Gastrocnemius medialis (tissue), 4 donors: ENCODE measurements at regions of chr13 and their contacts with region 1.

Region 1: DNA sequence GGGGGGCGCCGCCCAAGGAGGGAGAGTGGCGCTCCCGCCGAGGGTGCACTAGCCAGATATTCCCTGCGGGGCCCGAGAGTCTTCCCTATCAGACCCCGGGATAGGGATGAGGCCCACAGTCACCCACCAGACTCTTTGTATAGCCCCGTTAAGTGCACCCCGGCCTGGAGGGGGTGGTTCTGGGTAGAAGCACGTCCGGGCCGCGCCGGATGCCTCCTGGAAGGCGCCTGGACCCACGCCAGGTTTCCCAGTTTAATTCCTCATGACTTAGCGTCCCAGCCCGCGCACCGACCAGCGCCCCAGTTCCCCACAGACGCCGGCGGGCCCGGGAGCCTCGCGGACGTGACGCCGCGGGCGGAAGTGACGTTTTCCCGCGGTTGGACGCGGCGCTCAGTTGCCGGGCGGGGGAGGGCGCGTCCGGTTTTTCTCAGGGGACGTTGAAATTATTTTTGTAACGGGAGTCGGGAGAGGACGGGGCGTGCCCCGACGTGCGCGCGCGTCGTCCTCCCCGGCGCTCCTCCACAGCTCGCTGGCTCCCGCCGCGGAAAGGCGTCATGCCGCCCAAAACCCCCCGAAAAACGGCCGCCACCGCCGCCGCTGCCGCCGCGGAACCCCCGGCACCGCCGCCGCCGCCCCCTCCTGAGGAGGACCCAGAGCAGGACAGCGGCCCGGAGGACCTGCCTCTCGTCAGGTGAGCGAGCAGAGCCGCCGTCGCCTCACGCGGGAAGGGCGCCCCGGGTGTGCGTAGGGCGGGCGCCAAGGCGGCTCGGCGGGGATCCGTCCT is at the start of gene RB1:
- DNase-seq: peak; percentile 81 to 88
- ATAC-seq: peak; percentile 93 to 94
- H3K4me3 ChIP-seq: peak within 1 kb of the TSS; percentile 82 to 98 (median 92)
- H3K27ac ChIP-seq: peak within 1 kb of the TSS; percentile 94 to 99 (median 99)
- H3K4me1 ChIP-seq: peaks cover 13 to 23% of the 10 kb centered on the region in 2 donors
- H3K27me3 ChIP-seq: no peaks in the 10 kb centered on the region
- CTCF ChIP-seq: peak in 1 of 5 experiments; percentile 8
- POLR2A ChIP-seq: peak; percentile 97
- total RNA-seq, gene RB1: 29.3 to 45.6 (median 33.2) TPM

Region 2: GRCh38 chr13:48094781-48095502 is 208.6 kb before region 1 on chr13 and contains the start of gene MED4:
- in situ Hi-C with region 1: loop called in 1 of 4 experiments (anchors 10 kb)
- intact Hi-C with region 1: loop called (anchors 5 kb)
- DNase-seq: peak; percentile 85 to 92
- ATAC-seq: peak; percentile 97 to 98
- H3K4me3 ChIP-seq: peak within 1 kb of the TSS; percentile 85 to 99 (median 93)
- H3K27ac ChIP-seq: peak within 1 kb of the TSS; percentile 84 to 94 (median 91)
- H3K4me1 ChIP-seq: peaks cover 37 to 44% of the 10 kb centered on the region in 2 donors
- H3K27me3 ChIP-seq: no peaks in the 10 kb centered on the region
- CTCF ChIP-seq: peak; percentile 96 to 99 (median 98)
- POLR2A ChIP-seq: peak; percentile 85 to 86
- total RNA-seq, gene MED4: 30.7 to 37.5 (median 31.9) TPM

Region 3: DNA sequence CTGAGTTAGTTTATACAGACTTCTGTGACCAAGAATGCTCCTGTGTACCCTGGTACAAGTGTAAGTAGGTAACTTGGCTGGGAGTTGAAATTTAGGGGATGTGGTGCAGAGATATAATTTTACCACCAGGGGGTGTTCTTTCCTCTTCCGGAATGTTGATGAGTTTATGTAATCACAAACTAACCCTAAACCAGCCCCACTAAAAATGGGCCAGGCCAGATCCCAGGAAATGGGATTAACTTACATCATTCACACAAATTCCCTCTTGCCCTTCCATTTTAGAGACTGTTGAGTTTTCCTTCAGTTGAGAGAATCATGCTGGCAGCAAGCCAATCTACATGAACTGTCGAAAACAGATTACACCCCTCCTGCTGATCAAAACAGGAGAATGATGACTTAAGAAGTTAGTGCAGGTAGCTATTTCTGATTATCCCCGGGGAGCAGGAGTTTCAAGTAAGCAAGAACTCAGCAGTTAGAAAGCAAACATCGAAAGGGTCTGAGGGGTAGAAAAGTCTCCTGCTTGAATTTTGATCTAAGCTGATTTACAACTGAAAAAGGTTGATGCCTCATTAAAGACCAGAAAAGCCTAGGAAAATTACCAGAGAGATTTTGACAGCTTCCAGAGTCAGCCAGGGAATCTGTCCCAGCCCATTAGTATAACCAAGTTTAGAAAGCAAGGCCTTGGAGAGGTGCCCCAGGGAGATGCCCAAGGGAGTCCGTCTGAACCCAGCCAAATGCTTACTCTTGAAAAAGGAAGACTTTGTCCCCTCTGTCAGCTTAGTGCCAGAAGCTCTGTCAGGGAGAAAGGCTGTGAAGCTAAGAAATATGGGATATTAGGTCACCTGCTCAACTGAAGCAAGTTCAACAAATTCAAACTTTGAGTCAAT is 176.4 kb before region 1 on chr13:
- in situ Hi-C with region 1: loop called in 1 of 4 experiments (anchors 10 kb)
- intact Hi-C with region 1: loop called (anchors 2 kb)
- DNase-seq: peak; percentile 43 to 72
- ATAC-seq: peak; percentile 73 to 79
- H3K4me3 ChIP-seq: no peak overlapping the region
- H3K27ac ChIP-seq: peak overlapping the region; percentile 27 to 80 (median 73)
- H3K4me1 ChIP-seq: peaks cover 12 to 33% of the 10 kb centered on the region in 2 donors
- H3K27me3 ChIP-seq: no peaks in the 10 kb centered on the region
- CTCF ChIP-seq: peak; percentile 53 to 74 (median 72)
- POLR2A ChIP-seq: no peak

Region 4: DNA sequence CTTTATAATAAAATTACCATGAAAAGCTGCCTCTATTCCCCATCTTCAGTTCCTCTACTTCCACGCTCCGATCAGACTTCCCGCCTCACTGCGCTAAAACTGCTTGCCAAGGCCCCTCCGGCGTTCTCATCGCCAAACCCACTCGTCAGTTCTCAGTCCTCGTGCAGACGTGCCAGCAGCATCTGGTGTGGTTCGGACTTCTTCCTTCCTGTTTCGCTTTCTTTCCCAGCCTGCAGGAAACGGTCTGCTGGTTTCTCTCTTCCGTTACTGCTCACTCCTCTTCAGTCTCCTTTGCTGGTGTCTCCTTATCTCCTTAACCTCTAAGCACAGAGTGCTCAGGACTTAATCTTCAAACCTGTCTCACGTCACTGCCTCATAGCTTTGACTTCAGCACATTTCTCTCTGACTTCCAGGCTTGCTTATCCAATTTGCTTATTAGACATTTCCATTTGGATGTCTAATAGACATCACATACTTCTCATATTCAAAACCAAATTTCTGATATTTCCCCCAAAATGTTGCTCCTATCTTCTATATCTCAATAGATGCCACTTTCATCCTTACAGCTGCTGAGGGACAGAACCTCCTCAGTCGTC is 189.0 kb after region 1 on chr13:
- in situ Hi-C with region 1: no loop called
- intact Hi-C with region 1: no loop called
- DNase-seq: peak; percentile 52 to 67
- ATAC-seq: peak; percentile 71 to 74
- H3K4me3 ChIP-seq: peak overlapping the region; percentile 26 to 47 (median 37)
- H3K27ac ChIP-seq: peak overlapping the region; percentile 57 to 73 (median 67)
- H3K4me1 ChIP-seq: peaks cover 9 to 17% of the 10 kb centered on the region in 2 donors
- H3K27me3 ChIP-seq: no peaks in the 10 kb centered on the region
- CTCF ChIP-seq: no peak
- POLR2A ChIP-seq: no peak

Region 5: DNA sequence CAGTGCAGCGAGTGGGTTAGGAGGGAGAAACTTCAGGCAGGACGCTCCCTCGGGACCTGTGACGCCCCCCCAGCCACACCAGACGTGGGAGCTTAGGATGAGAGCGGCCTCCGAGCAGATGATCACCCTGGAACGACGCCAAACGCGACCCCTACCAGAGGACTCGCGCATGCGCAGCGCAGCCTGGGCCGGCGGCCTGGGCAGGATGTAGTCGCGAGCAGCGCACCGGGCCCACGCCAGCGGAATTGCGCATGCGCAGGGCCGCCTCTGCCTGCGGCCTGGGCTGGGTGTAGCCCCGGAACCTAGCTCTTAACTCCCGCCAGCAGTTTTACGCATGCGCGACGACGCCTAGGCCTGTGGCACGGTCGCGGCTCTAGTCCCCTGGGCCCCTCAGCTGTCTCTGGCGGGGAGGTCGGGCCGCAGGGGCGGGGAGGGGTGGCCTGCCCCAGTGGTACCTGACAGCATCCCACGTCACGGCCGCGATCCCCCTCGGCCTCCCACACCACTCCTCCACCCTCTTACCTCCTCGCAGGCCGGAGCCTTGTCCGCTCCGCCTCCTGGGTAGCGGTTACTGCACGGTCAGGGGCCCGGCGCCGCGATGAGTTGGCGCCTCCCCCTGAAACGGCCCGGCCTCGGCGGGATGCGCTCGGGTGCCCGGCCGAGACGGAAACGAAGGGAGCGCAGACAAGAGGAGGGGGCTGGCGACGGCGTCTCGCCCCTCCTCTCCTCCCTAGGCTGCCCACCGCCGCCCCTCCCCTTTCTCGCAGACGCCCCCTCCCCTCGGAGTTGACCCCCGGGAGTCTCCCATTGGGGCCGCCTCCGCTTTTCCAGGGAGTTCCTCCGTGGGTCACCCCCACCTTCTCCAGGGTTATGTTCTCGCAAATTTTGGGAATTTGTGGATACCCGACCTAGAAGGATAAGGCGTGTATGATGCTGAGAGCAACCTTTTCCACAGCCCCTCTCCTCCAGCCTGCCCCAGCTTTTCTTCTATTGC is 229.3 kb after region 1 on chr13 and contains the start of gene RCBTB2:
- in situ Hi-C with region 1: no loop called
- intact Hi-C with region 1: loop called (anchors 5 kb)
- DNase-seq: peak; percentile 96 to 98
- ATAC-seq: peak; percentile 95
- H3K4me3 ChIP-seq: peak within 1 kb of the TSS; percentile 81 to 94 (median 90)
- H3K27ac ChIP-seq: peak within 1 kb of the TSS; percentile 92 to 98 (median 94)
- H3K4me1 ChIP-seq: peaks cover 7 to 13% of the 10 kb centered on the region in 2 donors
- H3K27me3 ChIP-seq: no peaks in the 10 kb centered on the region
- CTCF ChIP-seq: no peak
- POLR2A ChIP-seq: peak; percentile 83 to 86
- total RNA-seq, gene RCBTB2: 1.7 to 9.1 (median 7.6) TPM